ENCODE measurements at regions of chr5 and their contacts with region 1.

Region 1: DNA sequence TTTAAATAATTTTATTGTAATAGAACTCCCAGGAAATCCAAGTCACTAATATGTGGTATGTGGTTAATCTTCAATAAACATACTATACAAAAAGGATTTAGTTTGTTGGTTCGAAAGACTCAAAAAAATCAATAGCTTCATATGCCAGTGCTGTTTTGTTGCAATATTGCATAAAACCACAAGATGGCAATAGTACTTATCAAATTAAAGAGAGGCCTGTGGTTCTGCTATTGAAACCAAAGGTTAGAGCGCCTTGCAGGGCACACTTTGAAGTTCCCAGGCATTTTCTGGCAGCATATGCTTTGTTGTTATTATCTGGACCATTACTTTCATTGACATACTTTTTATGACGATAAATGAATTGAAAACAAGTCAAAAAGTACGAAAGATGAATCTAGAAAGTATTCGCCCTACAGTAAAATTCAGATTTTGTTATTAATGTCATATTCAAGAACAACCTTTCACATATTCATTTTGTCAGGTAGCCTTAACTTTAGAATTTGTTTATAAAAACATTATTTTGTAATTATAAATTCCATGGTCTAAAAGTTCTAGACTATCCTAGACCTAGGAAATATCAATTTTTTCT is 316.3 kb downstream of the MCTP1 start:
- DNase-seq: peak; percentile 78 to 87 (median 87)
- H3K4me3 ChIP-seq: no peak overlapping the region
- H3K27ac ChIP-seq: no peak overlapping the region
- H3K4me1 ChIP-seq: peaks cover 0 to 5% (median 2%) of the 10 kb centered on the region in 4 experiments
- H3K27me3 ChIP-seq: no peaks in the 10 kb centered on the region

Region 2: GRCh38 chr5:95059636-95060035 is 91.0 kb after region 1 on chr5:
- CTCF ChIA-PET with region 1: no interaction called
- POLR2A ChIA-PET with region 1: no interaction called
- DNase-seq: peak in 2 of 3 donors; percentile 25 to 33
- H3K4me3 ChIP-seq: no peak overlapping the region
- H3K27ac ChIP-seq: no peak overlapping the region
- H3K4me1 ChIP-seq: peaks cover 12 to 16% (median 14%) of the 10 kb centered on the region in 4 experiments
- H3K27me3 ChIP-seq: no peaks in the 10 kb centered on the region

Region 3: DNA sequence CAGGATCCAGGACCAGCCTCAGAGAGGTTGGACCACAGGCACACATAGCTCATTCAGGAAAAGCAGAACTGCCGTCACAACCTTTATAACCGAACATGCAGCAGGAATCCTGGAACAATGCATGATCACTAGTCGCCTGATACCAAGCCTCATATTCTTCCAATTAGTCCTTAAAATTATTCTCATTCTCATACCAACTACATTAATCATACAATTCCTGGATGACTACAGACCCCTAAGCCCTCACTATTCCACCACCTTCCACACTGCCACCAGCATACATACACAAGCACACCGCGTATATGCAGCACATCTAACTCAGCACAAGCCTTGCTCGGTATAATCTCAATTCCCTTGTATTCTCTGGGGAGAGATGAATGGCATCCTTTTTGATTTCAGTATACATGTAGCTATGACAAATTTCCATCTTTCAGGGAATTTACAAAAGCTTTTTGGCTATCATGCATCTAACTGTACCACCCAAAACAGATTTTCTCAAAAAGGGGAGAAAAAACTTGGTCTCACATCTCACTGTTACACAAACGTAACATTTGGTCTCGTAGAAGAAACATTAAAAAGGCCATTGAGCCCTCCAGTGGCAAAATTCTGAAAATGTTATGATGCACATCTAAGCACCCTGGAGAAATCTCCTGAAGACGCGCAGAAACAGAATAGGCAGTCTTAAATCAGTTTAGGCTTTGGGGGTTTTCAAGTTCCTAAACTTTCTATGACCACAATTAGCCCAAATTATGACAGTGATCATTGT is 270.1 kb after region 1 on chr5:
- CTCF ChIA-PET with region 1: interaction called, 74 read pairs
- POLR2A ChIA-PET with region 1: no interaction called
- DNase-seq: peak; percentile 49 to 65 (median 59)
- H3K4me3 ChIP-seq: no peak overlapping the region
- H3K27ac ChIP-seq: no peak overlapping the region
- H3K4me1 ChIP-seq: peaks cover 0 to 18% (median 9%) of the 10 kb centered on the region in 4 experiments
- H3K27me3 ChIP-seq: no peaks in the 10 kb centered on the region

Region 4: GRCh38 chr5:95244479-95244878 is 275.9 kb after region 1 on chr5:
- CTCF ChIA-PET with region 1: interaction called, 74 read pairs
- POLR2A ChIA-PET with region 1: no interaction called
- DNase-seq: no peak
- H3K4me3 ChIP-seq: no peak overlapping the region
- H3K27ac ChIP-seq: no peak overlapping the region
- H3K4me1 ChIP-seq: peaks cover 0 to 18% (median 9%) of the 10 kb centered on the region in 4 experiments
- H3K27me3 ChIP-seq: no peaks in the 10 kb centered on the region

Region 5: GRCh38 chr5:95261437-95262175 is 293.0 kb after region 1 on chr5:
- CTCF ChIA-PET with region 1: interaction called, 83 read pairs
- POLR2A ChIA-PET with region 1: no interaction called
- DNase-seq: peak; percentile 71 to 90 (median 89)
- H3K4me3 ChIP-seq: no peak overlapping the region
- H3K27ac ChIP-seq: peak overlapping the region in 1 of 2 experiments; percentile 6
- H3K4me1 ChIP-seq: peaks cover 0 to 20% (median 5%) of the 10 kb centered on the region in 4 experiments
- H3K27me3 ChIP-seq: no peaks in the 10 kb centered on the region